GM12878 (cell line): ENCODE measurements at regions of chr16 and their contacts with region 1.

Region 1: GRCh38 chr16:3606441-3606840 is 5.0 kb downstream of the SLX4 start:
- DNase-seq: no peak
- ATAC-seq: no peak
- H3K4me3 ChIP-seq: no peak overlapping the region
- H3K27ac ChIP-seq: no peak overlapping the region
- H3K4me1 ChIP-seq: peaks cover 25% of the 10 kb centered on the region
- H3K27me3 ChIP-seq: no peaks in the 10 kb centered on the region
- CTCF ChIP-seq: no peak
- EP300 ChIP-seq: no peak
- POLR2A ChIP-seq: no peak
- RAD21 ChIP-seq: no peak

Region 2: GRCh38 chr16:3578610-3579551 is 27.6 kb before region 1 on chr16:
- CTCF ChIA-PET with region 1: no interaction called
- POLR2A ChIA-PET with region 1: interaction called, 3 read pairs
- RAD21 ChIA-PET with region 1: no interaction called
- SMC1A ChIA-PET with region 1: interaction called, 4 read pairs
- in situ Hi-C with region 1: no loop called
- intact Hi-C with region 1: loop called (anchors 2 kb)
- DNase-seq: peak; percentile 56
- ATAC-seq: peak; percentile 89
- H3K4me3 ChIP-seq: peak overlapping the region; percentile 16; the same call in 1 of the 2 replicates
- H3K27ac ChIP-seq: peak overlapping the region; percentile 91
- H3K4me1 ChIP-seq: peaks cover 45% of the 10 kb centered on the region
- H3K27me3 ChIP-seq: no peaks in the 10 kb centered on the region
- CTCF ChIP-seq: no peak
- EP300 ChIP-seq: peak in 1 of 2 experiments; percentile 37; a peak in 1 of 4 replicates
- POLR2A ChIP-seq: peak; percentile 70
- RAD21 ChIP-seq: no peak

Region 3: DNA sequence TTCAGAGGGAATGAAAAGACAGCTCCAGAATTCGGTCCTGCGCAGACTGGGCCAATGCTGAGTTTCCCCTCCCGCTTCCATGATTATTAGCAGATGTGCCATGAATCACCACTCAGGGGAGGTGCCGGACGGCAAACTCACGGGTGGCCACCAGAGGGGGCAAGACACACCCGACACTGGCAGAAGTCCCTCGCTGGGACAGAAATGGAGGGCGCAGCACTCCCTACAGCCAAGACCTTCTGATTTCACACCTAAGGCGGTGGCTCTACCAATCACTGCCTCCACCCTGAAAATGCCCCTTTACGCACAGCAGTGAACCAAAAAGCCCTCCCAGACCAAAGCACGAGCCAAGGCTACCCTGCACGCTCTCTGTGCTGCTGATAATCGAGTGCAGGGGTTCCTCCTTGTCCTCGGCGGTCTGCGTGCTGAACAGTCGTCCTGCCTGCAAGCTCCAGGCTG is 84.1 kb after region 1 on chr16:
- CTCF ChIA-PET with region 1: no interaction called
- POLR2A ChIA-PET with region 1: no interaction called
- RAD21 ChIA-PET with region 1: no interaction called
- SMC1A ChIA-PET with region 1: no interaction called
- in situ Hi-C with region 1: no loop called
- intact Hi-C with region 1: no loop called
- DNase-seq: peak; percentile 21
- ATAC-seq: peak; percentile 100
- H3K4me3 ChIP-seq: no peak overlapping the region
- H3K27ac ChIP-seq: no peak overlapping the region
- H3K4me1 ChIP-seq: peaks cover 5% of the 10 kb centered on the region; the same call in 1 of the 2 replicates
- H3K27me3 ChIP-seq: no peaks in the 10 kb centered on the region
- CTCF ChIP-seq: peak; percentile 88 to 94 (median 91); a peak in 5 of 6 replicates
- EP300 ChIP-seq: no peak
- POLR2A ChIP-seq: no peak
- RAD21 ChIP-seq: peak; percentile 72